ENCODE measurements at regions of chr6 and their contacts with region 1.

Region 1: DNA sequence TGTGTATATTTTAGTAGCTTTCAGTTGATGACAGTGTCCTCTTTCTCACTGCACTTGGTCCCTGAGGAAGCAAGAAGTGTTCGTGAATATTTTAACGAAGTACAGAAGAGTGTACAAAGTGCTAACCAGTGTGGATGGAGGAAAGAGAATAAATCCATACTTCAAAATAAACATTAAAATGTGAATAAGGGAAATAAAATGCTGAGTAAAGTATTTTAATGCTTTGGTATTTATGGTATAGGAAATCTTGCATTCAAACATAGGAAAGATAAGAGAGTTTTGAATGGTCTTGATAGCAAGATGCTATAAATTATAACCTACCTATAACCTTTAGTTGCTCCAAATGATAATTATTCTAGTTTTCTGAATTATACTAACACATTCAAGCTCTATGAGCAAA is 493.4 kb upstream of the EYS start:
- DNase-seq: no peak
- H3K4me3 ChIP-seq: no peak overlapping the region
- CTCF ChIP-seq: no peak

Region 2: GRCh38 chr6:66245231-66245630 is 44.8 kb after region 1 on chr6:
- in situ Hi-C with region 1: loop called (anchors 5 kb)
- DNase-seq: no peak
- H3K4me3 ChIP-seq: no peak overlapping the region
- CTCF ChIP-seq: no peak

Measured in astrocyte of the cerebellum (primary cell).